Activated T-helper 2 cell treated with anti-CD3 and anti-CD28 coated beads, Interferon-gamma antibody, Interleukin-2, Interleukin-4, amounts not matched to agents 10 μg/mL and 5 μg/mL and 100 μg/mL, durations not matched to agents 14 hours and 24 hours and 36 hours (primary cell): ENCODE measurements at regions of chr5 and their contacts with region 1.

Region 1: DNA sequence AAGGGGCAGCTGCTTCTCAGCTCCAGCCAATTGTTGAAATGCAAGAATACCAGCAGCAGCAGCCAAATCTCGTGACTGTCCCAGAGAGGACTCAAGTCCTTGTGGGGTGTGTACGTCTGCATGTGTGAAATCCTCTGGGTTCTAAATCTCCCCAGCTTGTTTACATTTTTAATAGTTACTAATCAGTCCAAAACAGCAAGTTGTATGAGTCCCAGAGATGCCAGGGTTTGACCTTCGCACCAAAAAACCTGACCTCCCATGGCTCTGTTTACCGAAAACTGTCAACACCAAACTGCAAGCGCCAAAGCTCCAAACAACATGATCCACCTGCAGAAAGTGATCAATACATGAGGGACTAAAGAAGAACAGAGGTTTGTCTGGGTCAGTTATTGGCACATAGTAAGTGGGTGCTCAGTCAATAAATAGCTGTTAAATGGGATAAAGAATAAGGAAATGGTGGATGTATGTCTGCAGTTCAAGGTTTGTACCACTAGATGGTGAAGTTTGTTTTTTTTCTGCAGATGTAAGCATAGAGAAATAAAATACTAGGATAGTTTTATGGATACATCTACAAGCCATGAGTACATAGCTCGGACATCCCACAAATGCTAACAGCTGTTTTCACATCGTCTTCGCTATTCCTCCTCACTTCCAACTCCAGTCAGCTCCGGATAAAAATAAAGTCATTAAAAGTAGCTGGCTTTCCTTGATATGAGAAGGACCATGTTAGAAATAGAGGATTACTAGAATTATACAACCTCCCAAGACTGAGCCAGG is 85.3 kb upstream of the ADRB2 start:
- DNase-seq: no peak
- H3K4me3 Mint-ChIP-seq: no peak overlapping the region
- H3K27ac Mint-ChIP-seq: no peak overlapping the region
- H3K4me1 Mint-ChIP-seq: no peaks in the 10 kb centered on the region
- H3K27me3 Mint-ChIP-seq: peaks cover 14% of the 10 kb centered on the region

Region 2: GRCh38 chr5:148957591-148958202 is 216.5 kb after region 1 on chr5:
- intact Hi-C with region 1: loop called (anchors 1 kb)
- DNase-seq: no peak
- H3K4me3 Mint-ChIP-seq: no peak overlapping the region
- H3K27ac Mint-ChIP-seq: no peak overlapping the region
- H3K4me1 Mint-ChIP-seq: no peaks in the 10 kb centered on the region
- H3K27me3 Mint-ChIP-seq: peaks cover 10% of the 10 kb centered on the region

Region 3: DNA sequence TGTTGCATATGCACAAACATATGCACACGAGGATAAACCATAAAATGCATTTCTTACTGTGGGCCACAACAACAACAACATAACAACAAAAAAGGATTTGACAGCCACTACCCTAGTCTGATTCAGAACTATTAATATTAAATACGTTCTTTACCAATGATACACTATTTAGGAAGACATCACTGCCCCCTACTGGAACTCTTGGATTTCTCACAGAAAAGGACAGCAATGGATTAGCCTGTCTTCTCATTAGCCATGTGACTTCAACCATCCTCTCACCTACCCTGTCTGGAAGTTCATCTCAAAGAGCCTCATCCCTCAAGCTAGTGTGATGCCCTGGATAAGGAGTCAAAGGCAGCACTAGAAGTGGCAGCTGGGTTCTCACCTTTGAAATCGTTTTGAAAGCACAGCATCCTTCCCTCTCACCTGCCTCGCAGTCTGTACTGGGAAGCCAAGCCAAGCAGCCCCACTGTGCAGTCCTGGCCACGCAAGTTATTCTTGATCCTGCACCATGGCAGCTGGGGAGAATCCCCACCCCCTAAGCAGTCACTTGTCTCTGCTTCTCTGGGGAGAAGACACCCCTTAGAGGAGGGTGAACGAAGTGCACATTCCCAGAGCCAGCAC is 257.1 kb after region 1 on chr5:
- intact Hi-C with region 1: loop called (anchors 1 kb)
- DNase-seq: no peak
- H3K4me3 Mint-ChIP-seq: no peak overlapping the region
- H3K27ac Mint-ChIP-seq: no peak overlapping the region
- H3K4me1 Mint-ChIP-seq: no peaks in the 10 kb centered on the region
- H3K27me3 Mint-ChIP-seq: peaks cover 20% of the 10 kb centered on the region

Region 4: DNA sequence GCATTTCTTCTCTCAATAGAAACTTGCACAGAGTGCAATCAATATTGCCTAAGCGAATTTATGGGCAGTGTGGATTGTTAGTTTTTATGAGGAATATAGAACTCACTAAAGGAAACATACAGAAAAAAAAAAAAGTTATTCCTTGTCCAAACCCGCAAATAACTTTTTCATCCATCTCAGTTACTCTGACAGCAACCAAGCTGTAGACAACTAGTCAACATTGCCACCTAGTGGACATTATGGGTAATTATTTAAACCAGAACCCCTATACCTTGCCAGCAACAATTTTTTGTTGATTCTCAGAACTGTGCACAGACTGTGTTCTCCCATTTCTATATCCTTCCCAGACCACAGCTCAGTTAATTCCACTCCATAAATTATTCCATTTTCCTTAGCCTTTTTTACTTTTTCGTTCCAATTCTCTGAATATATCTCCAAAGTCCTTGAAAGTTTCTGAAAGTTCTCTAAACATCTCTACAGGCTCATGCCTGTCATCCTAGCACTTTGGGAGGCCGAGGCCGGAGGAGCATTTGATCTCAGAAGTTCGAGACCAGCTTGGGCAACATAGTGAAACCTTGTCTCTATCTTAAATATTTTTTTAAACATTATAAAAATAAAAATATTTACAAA is 527.9 kb after region 1 on chr5:
- intact Hi-C with region 1: loop called (anchors 5 kb)
- DNase-seq: no peak
- H3K4me3 Mint-ChIP-seq: no peak overlapping the region
- H3K27ac Mint-ChIP-seq: no peak overlapping the region
- H3K4me1 Mint-ChIP-seq: peaks cover 7% of the 10 kb centered on the region
- H3K27me3 Mint-ChIP-seq: peaks cover 45% of the 10 kb centered on the region